HepG2 (cell line): ENCODE measurements at regions of chr1 and their contacts with region 1.

Region 1: DNA sequence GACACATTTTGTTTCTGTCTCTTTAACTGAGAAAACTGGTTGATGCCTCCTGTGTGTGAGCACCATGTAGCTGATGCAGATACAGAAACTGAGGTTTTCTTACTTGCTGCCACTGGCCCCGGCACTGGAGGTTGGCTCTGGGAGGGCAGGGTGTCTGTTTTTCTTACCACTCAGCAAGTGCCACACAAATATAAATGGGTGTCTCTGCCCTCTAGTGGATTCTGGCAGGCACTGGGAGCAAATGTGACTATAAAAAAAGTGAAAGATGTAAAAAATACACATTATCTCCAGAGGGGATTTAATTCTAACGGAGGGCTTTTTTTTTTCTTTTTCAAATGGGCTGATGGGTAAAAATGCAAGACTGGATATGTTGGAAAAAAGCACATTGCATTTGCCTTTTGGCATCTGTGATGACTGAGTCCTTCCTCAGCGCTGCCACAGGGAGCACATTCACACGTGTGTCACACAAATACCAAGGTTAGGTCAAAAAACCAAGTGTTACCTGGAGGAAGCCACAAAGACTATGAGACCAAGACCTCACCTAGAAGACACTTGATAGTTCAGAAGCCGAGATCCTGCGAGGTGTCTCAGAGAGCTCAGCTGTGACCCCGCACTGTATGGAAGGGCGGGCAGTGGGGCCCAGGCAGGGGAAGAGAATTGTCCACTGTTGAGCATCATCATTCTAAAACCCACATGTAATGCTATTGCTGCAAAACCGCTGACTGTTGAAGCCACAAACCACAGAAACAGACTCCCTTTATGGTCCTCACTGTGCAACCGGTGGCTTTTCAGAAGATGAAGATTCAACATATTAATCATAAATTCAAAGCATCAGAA is 18.9 kb downstream of the PGBD2 start:
- DNase-seq: peak; percentile 61
- ATAC-seq: peak; percentile 87
- H3K4me3 ChIP-seq: no peak overlapping the region
- H3K27ac ChIP-seq: no peak overlapping the region
- H3K4me1 ChIP-seq: peaks cover 17% of the 10 kb centered on the region; the same call in 1 of the 2 replicates
- H3K27me3 ChIP-seq: no peaks in the 10 kb centered on the region
- CTCF ChIP-seq: peak; percentile 52
- EP300 ChIP-seq: no peak
- POLR2A ChIP-seq: no peak
- RAD21 ChIP-seq: no peak

Region 2: DNA sequence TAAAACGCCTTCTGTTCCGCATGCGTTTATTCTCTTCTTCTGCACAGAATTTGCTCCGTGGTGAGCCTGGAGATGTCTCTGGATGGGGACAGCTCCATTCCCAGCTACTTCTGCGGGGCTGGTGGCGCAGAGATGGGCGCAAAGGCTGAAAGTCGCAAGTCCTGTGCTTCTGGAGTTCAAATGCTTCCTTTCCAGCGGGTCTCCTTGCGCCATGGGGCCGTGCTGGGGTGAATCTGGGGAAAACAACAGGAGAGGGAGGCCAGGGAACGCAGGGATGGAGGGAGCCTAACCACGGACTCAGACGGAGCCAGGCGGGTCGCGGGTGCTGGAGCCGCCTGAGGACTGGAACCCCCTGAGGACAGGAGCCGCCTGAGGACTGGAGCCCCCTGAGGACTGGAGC is 618.8 kb before region 1 on chr1:
- CTCF ChIA-PET with region 1: no interaction called
- POLR2A ChIA-PET with region 1: no interaction called
- in situ Hi-C with region 1: no loop called
- intact Hi-C with region 1: no loop called
- DNase-seq: no peak
- ATAC-seq: no peak
- H3K4me3 ChIP-seq: no peak overlapping the region
- H3K27ac ChIP-seq: no peak overlapping the region
- H3K4me1 ChIP-seq: no peaks in the 10 kb centered on the region
- H3K27me3 ChIP-seq: no peaks in the 10 kb centered on the region
- CTCF ChIP-seq: no peak
- EP300 ChIP-seq: no peak
- POLR2A ChIP-seq: no peak
- RAD21 ChIP-seq: no peak

Region 3: DNA sequence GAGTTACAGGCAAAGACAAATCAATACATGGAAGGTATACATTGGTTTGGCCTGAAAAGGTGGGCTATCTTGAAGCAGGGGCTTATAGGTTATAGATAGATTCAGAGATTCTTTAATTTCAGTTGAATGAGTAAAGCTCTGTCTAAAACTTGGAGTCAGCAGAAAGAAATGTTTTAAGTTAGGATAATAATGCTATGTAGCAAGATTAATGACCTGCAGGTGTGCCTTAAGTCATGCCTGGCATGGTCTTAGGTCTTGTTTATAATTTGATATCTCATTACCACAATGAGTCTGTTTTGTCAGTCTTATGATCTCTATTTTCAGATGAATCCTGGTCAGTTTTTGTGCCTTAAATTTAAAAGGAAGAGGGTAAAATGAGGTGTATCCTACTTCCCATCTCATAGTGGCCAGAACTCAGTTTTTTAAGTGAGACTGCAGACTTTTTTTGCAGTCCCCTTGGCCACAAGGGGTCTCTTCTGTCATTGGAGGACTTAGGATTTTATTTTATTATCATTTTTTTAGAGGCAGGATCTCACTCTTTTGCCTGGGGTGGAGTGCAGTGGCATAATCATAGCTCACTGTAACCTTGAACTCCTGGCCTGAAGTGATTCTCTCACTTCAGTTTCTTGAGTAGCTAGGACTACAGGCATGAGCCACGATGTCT is 40.1 kb before region 1 on chr1:
- CTCF ChIA-PET with region 1: no interaction called
- POLR2A ChIA-PET with region 1: no interaction called
- in situ Hi-C with region 1: no loop called
- intact Hi-C with region 1: loop called (anchors 1 kb)
- DNase-seq: no peak
- ATAC-seq: no peak; the same call in 2 of the 3 replicates
- H3K4me3 ChIP-seq: no peak overlapping the region
- H3K27ac ChIP-seq: no peak overlapping the region
- H3K4me1 ChIP-seq: no peaks in the 10 kb centered on the region
- H3K27me3 ChIP-seq: no peaks in the 10 kb centered on the region
- CTCF ChIP-seq: no peak
- EP300 ChIP-seq: no peak
- POLR2A ChIP-seq: no peak
- RAD21 ChIP-seq: no peak